ENCODE measurements at regions of chr3 and their contacts with region 1.

Region 1: GRCh38 chr3:135348690-135349089 is 553.6 kb downstream of the EPHB1 start:
- DNase-seq: no peak
- H3K4me3 ChIP-seq: no peak overlapping the region
- H3K27ac ChIP-seq: no peak overlapping the region
- H3K4me1 ChIP-seq: no peaks in the 10 kb centered on the region
- H3K27me3 ChIP-seq: no peaks in the 10 kb centered on the region
- CTCF ChIP-seq: no peak

Region 2: GRCh38 chr3:134824791-134825190 is 523.9 kb before region 1 on chr3:
- CTCF ChIA-PET with region 1: no interaction called
- dilution Hi-C with region 1: loop called (anchors 10 kb)
- in situ Hi-C with region 1: no loop called
- intact Hi-C with region 1: no loop called
- DNase-seq: no peak
- H3K4me3 ChIP-seq: no peak overlapping the region
- H3K27ac ChIP-seq: no peak overlapping the region
- H3K4me1 ChIP-seq: no peaks in the 10 kb centered on the region
- H3K27me3 ChIP-seq: no peaks in the 10 kb centered on the region
- CTCF ChIP-seq: no peak

Region 3: DNA sequence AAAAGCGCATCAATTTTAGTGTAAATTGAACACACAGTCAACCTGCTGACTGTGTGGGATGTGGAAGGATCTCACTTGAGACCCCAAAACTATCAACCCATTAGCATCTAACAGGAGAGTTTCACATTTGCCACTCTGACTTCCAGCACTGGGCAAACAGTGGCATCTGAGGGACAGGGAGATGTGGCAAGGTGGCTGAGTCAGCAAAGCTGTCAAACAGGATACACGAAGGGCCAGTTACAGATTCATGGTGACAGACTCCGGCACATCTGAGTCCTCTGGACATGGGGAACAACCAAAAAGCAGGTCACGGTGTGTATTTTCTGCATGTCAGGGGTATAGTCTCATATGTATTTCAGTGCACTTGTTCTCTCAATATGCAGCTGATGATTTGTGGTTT is 43.5 kb after region 1 on chr3:
- CTCF ChIA-PET with region 1: no interaction called
- dilution Hi-C with region 1: no loop called
- in situ Hi-C with region 1: no loop called
- intact Hi-C with region 1: no loop called
- DNase-seq: no peak
- H3K4me3 ChIP-seq: no peak overlapping the region
- H3K27ac ChIP-seq: no peak overlapping the region
- H3K4me1 ChIP-seq: no peaks in the 10 kb centered on the region
- H3K27me3 ChIP-seq: no peaks in the 10 kb centered on the region
- CTCF ChIP-seq: no peak

Region 4: GRCh38 chr3:135503760-135504686 is 155.3 kb after region 1 on chr3:
- CTCF ChIA-PET with region 1: no interaction called
- dilution Hi-C with region 1: no loop called
- in situ Hi-C with region 1: no loop called
- intact Hi-C with region 1: no loop called
- DNase-seq: peak; percentile 40
- H3K4me3 ChIP-seq: no peak overlapping the region
- H3K27ac ChIP-seq: no peak overlapping the region
- H3K4me1 ChIP-seq: no peaks in the 10 kb centered on the region
- H3K27me3 ChIP-seq: no peaks in the 10 kb centered on the region
- CTCF ChIP-seq: peak; percentile 77 to 79

Measured in mammary epithelial cell (primary cell).